ENCODE measurements at regions of chr11 and their contacts with region 1.

Region 1: DNA sequence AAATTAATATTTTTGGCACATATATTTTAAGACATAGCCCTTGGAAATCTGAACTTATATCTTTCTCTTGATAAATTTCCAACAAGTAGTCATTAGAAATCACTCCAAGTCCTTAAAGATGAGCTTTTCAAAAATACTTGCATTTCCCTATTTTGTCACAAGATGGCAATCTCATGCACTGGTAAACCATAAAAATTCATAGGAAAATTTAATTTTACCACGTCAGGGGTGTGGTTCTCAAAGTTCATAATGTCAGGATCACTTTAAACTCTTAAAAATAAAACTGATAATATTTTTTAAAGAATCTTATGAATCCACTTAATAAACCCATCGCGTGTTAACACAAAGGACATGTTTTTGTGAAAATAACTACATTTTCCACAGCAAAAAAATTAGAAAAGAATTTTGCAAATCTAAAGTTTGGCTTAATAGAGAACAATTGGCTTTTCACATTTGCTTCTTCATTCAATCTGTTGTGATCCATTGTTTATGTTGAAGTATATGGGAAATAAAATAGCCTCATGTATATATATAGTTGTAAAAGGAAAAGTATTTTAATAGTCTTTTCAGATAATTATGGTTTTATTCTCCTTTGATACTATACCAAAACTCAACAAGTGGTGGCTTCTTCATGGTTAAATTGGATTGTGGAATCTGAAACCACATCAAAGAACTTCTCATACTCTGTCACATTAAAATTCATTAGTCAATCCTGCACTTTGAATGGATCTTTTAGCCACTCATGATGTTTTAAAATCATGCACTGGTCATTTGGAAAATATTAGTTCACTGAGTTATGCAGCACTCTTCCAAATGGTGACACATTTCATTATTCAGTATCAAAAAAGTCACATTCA is 169.1 kb downstream of the CADM1 start:
- DNase-seq: peak in 1 of 5 donors; percentile 49
- H3K4me3 ChIP-seq: no peak overlapping the region
- H3K27ac ChIP-seq: no peak overlapping the region
- H3K4me1 ChIP-seq: no peaks in the 10 kb centered on the region
- H3K27me3 ChIP-seq: no peaks in the 10 kb centered on the region
- CTCF ChIP-seq: peak; percentile 56

Region 2: GRCh38 chr11:116276051-116277044 is 941.2 kb after region 1 on chr11:
- intact Hi-C with region 1: loop called (anchors 10 kb)
- DNase-seq: peak; percentile 85 to 91 (median 86)
- H3K4me3 ChIP-seq: peak overlapping the region in 1 of 3 donors; percentile 36
- H3K27ac ChIP-seq: no peak overlapping the region
- H3K4me1 ChIP-seq: peaks cover 0 to 3% (median 0%) of the 10 kb centered on the region in 3 donors
- H3K27me3 ChIP-seq: no peaks in the 10 kb centered on the region
- CTCF ChIP-seq: peak; percentile 97